GM12878 (cell line): ENCODE measurements at regions of chr7 and their contacts with region 1.

Region 1: DNA sequence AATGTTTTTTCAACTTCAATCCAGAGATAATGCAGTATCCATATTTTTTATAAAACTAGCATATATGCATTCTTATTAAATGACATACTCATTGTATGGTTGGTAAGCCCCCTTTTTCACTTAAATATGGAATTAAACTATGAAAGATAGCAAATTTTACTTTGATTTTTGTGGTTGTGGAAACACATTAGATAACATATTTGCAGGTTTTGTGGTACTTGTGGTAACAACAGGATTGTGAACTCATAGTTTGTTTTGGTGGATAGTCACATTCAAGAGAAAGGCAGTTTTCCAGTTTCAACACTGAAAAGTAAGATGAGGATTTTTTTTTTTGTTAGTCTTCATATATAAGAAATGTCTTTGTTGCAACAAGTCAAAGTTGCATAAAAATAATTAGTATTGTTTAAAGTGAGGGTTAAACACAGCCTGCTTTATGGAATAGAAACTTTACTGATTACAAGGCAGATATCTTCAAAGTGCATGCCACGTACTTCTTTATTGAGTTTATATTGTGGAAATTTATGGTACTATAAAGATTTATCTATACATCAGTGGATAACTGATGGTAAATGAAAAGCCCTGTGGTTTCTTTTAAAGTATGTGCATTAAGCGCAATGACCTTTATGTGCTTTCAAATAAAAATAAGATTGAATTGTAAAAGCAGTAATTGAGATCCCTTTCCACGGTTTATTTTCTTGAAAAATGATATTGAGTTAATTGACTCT is 39.7 kb upstream of the SEMA3D start:
- DNase-seq: no peak
- ATAC-seq: no peak
- H3K4me3 ChIP-seq: no peak overlapping the region
- H3K27ac ChIP-seq: no peak overlapping the region
- H3K4me1 ChIP-seq: no peaks in the 10 kb centered on the region
- H3K27me3 ChIP-seq: no peaks in the 10 kb centered on the region
- CTCF ChIP-seq: no peak
- EP300 ChIP-seq: no peak
- POLR2A ChIP-seq: no peak
- RAD21 ChIP-seq: no peak

Region 2: GRCh38 chr7:85172530-85172941 is 54.0 kb before region 1 on chr7:
- CTCF ChIA-PET with region 1: no interaction called
- POLR2A ChIA-PET with region 1: no interaction called
- RAD21 ChIA-PET with region 1: no interaction called
- SMC1A ChIA-PET with region 1: no interaction called
- in situ Hi-C with region 1: no loop called
- intact Hi-C with region 1: no loop called
- DNase-seq: no peak
- ATAC-seq: no peak
- H3K4me3 ChIP-seq: no peak overlapping the region
- H3K27ac ChIP-seq: no peak overlapping the region
- H3K4me1 ChIP-seq: no peaks in the 10 kb centered on the region
- H3K27me3 ChIP-seq: no peaks in the 10 kb centered on the region
- CTCF ChIP-seq: no peak
- EP300 ChIP-seq: no peak
- POLR2A ChIP-seq: no peak
- RAD21 ChIP-seq: no peak

Region 3: DNA sequence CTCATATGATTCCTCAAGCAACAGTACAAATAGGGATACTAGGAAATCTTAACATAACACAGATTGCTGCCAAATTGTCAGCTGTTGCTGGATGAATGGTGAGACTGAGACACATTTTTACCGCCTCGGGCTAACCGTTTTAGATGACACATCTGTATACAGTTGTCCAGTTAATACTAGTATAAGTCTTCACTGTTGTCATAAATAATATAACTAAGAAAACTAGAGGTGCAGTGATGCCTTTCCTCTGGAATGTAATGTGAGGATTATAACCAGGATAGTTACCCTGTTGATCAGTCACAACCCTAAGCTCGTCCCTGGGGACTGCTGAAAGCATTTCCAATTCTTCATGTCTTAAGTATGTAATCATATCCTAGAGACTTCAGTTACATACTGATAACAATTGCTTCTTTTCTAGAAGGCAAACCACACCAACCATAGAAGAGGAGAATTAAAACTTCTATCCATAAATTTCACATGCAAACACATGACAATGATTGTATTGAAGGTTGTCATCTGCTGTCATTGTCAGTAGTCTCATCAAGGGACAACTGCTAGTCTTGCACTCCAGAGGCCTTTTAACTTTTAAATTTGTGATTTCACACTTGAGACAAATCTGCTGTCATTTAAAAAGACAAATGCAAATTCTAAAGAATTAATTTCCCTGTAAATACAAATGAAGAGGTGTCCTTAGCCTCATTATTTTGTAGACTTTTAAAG is 60.7 kb after region 1 on chr7:
- CTCF ChIA-PET with region 1: interaction called, 3 read pairs
- POLR2A ChIA-PET with region 1: no interaction called
- RAD21 ChIA-PET with region 1: no interaction called
- SMC1A ChIA-PET with region 1: no interaction called
- in situ Hi-C with region 1: no loop called
- intact Hi-C with region 1: loop called (anchors 10 kb)
- DNase-seq: no peak
- ATAC-seq: no peak
- H3K4me3 ChIP-seq: no peak overlapping the region
- H3K27ac ChIP-seq: no peak overlapping the region
- H3K4me1 ChIP-seq: no peaks in the 10 kb centered on the region
- H3K27me3 ChIP-seq: no peaks in the 10 kb centered on the region
- CTCF ChIP-seq: no peak
- EP300 ChIP-seq: no peak
- POLR2A ChIP-seq: no peak
- RAD21 ChIP-seq: no peak